CD14-positive monocyte (primary cell): ENCODE measurements at regions of chr20 and their contacts with region 1.

Region 1: GRCh38 chr20:19692685-19693119 is 65.4 kb upstream of the RIN2 start:
- DNase-seq: peak; percentile 37 to 62 (median 55)
- H3K4me3 ChIP-seq: no peak overlapping the region
- H3K4me3 Mint-ChIP-seq: peak overlapping the region; percentile 21 to 76
- H3K27ac ChIP-seq: no peak overlapping the region
- H3K27ac Mint-ChIP-seq: no peak overlapping the region
- H3K4me1 ChIP-seq: peaks cover 19 to 22% of the 10 kb centered on the region in 2 donors
- H3K4me1 Mint-ChIP-seq: peaks cover 27% of the 10 kb centered on the region
- H3K27me3 ChIP-seq: no peaks in the 10 kb centered on the region
- H3K27me3 Mint-ChIP-seq: peaks cover 0 to 6% (median 0%) of the 10 kb centered on the region in 3 donors
- CTCF ChIP-seq: peak; percentile 97

Region 2: DNA sequence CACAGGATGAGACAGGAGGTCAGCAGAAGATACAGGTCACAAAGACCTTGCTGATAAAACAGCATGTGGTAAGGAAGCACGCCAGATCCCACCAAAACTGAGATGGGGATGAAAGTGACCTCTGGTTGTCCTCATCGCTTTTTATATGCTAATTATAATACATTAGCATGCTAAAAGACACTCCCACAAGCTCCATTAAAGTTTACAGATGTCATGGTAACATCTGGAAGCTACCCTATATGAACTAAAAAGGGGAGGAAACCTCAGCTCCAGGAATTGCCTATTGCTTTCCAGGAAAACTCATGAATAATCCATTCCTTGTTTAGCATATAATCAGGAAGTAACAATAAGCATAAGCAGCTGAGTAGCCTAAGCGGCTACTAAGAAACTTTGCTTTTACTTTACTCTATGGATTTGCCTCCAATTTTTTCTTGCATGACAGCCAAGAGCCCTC is 56.9 kb after region 1 on chr20:
- intact Hi-C with region 1: loop called in 1 of 2 experiments (anchors 5 kb)
- DNase-seq: no peak
- H3K4me3 ChIP-seq: no peak overlapping the region
- H3K4me3 Mint-ChIP-seq: no peak overlapping the region
- H3K27ac ChIP-seq: no peak overlapping the region
- H3K27ac Mint-ChIP-seq: no peak overlapping the region
- H3K4me1 ChIP-seq: peaks cover 10 to 11% of the 10 kb centered on the region in 2 donors
- H3K4me1 Mint-ChIP-seq: peaks cover 12% of the 10 kb centered on the region
- H3K27me3 ChIP-seq: no peaks in the 10 kb centered on the region
- H3K27me3 Mint-ChIP-seq: peaks cover 1 to 7% (median 5%) of the 10 kb centered on the region in 3 donors
- CTCF ChIP-seq: no peak

Region 3: GRCh38 chr20:19903168-19903811 is 210.6 kb after region 1 on chr20:
- intact Hi-C with region 1: loop called in 1 of 2 experiments (anchors 10 kb)
- DNase-seq: peak; percentile 86 to 92 (median 91)
- H3K4me3 ChIP-seq: peak overlapping the region in 1 of 3 experiments; percentile 51
- H3K4me3 Mint-ChIP-seq: peak overlapping the region; percentile 42 to 57
- H3K27ac ChIP-seq: peak overlapping the region; percentile 74 to 96
- H3K27ac Mint-ChIP-seq: peak overlapping the region; percentile 92 to 97 (median 96)
- H3K4me1 ChIP-seq: peaks cover 53 to 54% of the 10 kb centered on the region in 2 donors
- H3K4me1 Mint-ChIP-seq: peaks cover 52% of the 10 kb centered on the region
- H3K27me3 ChIP-seq: no peaks in the 10 kb centered on the region
- H3K27me3 Mint-ChIP-seq: peaks cover 0 to 2% (median 0%) of the 10 kb centered on the region in 3 donors
- CTCF ChIP-seq: peak; percentile 40

Region 4: GRCh38 chr20:19995220-19995863 is 302.6 kb after region 1 on chr20:
- intact Hi-C with region 1: loop called (anchors 5 to 10 kb)
- DNase-seq: peak in 2 of 3 donors; percentile 63 to 74
- H3K4me3 ChIP-seq: no peak overlapping the region
- H3K4me3 Mint-ChIP-seq: no peak overlapping the region
- H3K27ac ChIP-seq: peak overlapping the region in 1 of 2 donors; percentile 10
- H3K27ac Mint-ChIP-seq: peak overlapping the region in 6 of 7 donors; percentile 35 to 76 (median 72)
- H3K4me1 ChIP-seq: peaks cover 36 to 45% of the 10 kb centered on the region in 2 donors
- H3K4me1 Mint-ChIP-seq: peaks cover 43% of the 10 kb centered on the region
- H3K27me3 ChIP-seq: no peaks in the 10 kb centered on the region
- H3K27me3 Mint-ChIP-seq: peaks cover 0 to 2% (median 0%) of the 10 kb centered on the region in 3 donors
- CTCF ChIP-seq: peak; percentile 83